IMR-90 (cell line): ENCODE measurements at regions of chr2 and their contacts with region 1.

Region 1: GRCh38 chr2:20682167-20682920 is 15.4 kb downstream of the GDF7 start:
- DNase-seq: peak; percentile 23
- ATAC-seq: peak; percentile 84
- H3K4me3 ChIP-seq: no peak overlapping the region
- H3K27ac ChIP-seq: no peak overlapping the region
- H3K4me1 ChIP-seq: no peaks in the 10 kb centered on the region
- H3K27me3 ChIP-seq: no peaks in the 10 kb centered on the region
- CTCF ChIP-seq: peak; percentile 64
- POLR2A ChIP-seq: no peak
- RAD21 ChIP-seq: peak; percentile 68

Region 2: DNA sequence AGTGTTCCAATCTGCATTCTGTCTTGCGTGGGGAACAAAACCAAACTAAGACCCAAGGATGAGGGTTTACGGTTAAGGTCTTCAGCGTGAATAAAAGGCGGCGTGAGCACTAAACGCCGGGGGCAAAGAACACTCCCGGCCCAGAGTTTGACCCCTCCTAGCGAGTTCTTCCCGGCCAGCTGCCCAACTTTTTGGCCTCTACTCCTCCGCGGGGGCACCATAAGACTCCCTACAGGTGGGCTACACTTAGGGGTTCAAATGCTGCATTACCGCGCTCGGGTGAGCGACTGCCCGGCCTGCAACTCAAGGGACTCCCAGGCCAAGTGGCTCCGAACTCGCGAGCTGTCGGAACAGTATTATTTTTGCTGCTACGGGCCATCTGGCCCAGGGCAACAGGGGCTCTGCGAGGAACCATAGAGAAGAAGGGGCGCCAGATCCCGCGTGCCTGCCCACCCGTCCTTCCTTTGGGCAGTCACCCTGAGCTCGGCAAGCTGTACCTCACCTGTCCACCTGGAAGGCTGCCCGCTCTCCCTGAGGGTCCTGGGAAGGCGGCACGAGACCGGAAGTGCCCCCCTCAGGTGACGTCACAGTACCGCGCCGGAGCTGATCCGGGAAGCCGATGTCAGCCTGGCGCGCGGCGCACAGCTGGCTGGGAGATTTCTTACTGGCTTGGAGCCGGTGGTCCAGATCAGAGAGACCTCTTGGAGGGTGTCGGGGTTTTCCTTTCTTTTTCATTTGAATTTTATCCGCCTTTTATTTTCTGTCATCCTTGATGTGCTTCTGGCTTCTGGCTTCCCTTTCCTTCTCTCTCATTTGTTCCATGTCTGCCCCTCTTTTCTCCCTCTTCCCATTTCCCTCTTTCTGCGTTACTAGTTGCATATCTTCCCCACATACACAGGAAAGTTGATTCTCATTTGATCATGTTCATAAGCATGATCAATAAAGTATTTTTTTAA is 140.5 kb after region 1 on chr2 and contains the start of gene LDAH:
- CTCF ChIA-PET with region 1: interaction called, 3 read pairs
- POLR2A ChIA-PET with region 1: no interaction called
- dilution Hi-C with region 1: no loop called
- in situ Hi-C with region 1: no loop called
- intact Hi-C with region 1: loop called (anchors 2 kb)
- DNase-seq: peak; percentile 87
- ATAC-seq: peak; percentile 95
- H3K4me3 ChIP-seq: peak within 1 kb of the TSS; percentile 66
- H3K27ac ChIP-seq: peak within 1 kb of the TSS; percentile 69
- H3K4me1 ChIP-seq: no peaks in the 10 kb centered on the region
- H3K27me3 ChIP-seq: no peaks in the 10 kb centered on the region
- CTCF ChIP-seq: no peak
- POLR2A ChIP-seq: peak; percentile 84
- RAD21 ChIP-seq: no peak
- total RNA-seq, gene LDAH: 22.5 and 31.7 TPM in 2 replicates

Region 3: GRCh38 chr2:20962939-20963557 is 280.7 kb after region 1 on chr2:
- CTCF ChIA-PET with region 1: interaction called, 3 read pairs
- POLR2A ChIA-PET with region 1: no interaction called
- dilution Hi-C with region 1: no loop called
- in situ Hi-C with region 1: no loop called
- intact Hi-C with region 1: loop called (anchors 1 kb)
- DNase-seq: peak; percentile 48
- ATAC-seq: peak; percentile 91
- H3K4me3 ChIP-seq: no peak overlapping the region
- H3K27ac ChIP-seq: no peak overlapping the region
- H3K4me1 ChIP-seq: no peaks in the 10 kb centered on the region
- H3K27me3 ChIP-seq: peaks cover 14% of the 10 kb centered on the region
- CTCF ChIP-seq: peak; percentile 85
- POLR2A ChIP-seq: no peak
- RAD21 ChIP-seq: peak; percentile 79